Body of pancreas (tissue), 4 donors: ENCODE measurements at regions of chr13 and their contacts with region 1.

Region 1: GRCh38 chr13:20049558-20050473 is 91.3 kb downstream of the ZMYM2 start:
- DNase-seq: no peak
- ATAC-seq: peak; percentile 35
- H3K4me3 ChIP-seq: no peak overlapping the region
- H3K27ac ChIP-seq: peak overlapping the region in 2 of 4 donors; percentile 16 to 20
- H3K4me1 ChIP-seq: no peaks in the 10 kb centered on the region
- H3K27me3 ChIP-seq: no peaks in the 10 kb centered on the region
- CTCF ChIP-seq: no peak
- POLR2A ChIP-seq: no peak

Region 2: DNA sequence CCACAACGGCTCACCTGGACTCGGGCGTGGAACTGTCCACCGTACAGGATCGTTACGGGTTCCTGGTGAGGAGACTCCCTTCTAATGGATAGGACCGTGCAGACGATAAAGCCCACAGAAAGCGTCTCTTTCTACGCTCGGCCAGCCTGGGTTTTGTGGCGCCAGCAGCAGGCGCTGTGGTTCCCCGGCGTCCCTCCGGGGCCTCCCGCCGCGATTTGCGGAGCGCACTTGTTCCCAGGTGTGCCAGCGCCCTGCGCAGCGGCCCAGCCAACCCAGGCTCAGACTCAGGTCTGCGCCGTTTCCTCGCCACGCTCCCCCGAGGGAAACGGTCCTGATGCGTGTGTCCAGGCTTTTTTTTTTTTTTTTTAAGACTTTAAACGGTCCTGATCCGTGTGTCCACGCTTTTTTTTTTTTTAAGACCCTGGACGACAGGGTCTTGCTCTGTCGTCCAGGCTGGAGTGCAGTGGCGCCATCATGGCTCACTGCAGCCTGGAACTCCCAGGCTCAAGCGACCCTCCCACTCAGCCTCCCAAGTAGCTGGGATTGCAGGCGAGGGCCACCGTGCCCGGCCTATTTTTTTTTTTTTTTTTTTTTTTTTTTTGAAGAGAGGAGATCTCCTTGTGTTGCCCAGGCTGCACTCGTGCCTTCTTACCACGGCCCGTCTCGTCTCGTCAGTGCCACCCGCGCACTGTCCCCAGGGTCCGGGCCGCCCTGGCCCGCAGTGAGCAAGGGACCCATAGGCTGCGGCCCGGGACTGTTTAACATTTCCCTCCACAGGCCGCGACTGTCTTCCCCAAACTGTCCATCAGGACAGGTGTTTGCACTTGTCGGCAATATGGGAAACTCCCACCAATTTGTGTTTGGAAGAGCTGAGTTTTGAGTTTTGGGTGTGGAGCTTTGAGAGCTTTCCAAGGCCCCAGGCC is 87.2 kb after region 1 on chr13:
- intact Hi-C with region 1: no loop called
- DNase-seq: peak; percentile 60 to 74 (median 68)
- ATAC-seq: peak; percentile 89
- H3K4me3 ChIP-seq: no peak overlapping the region
- H3K27ac ChIP-seq: no peak overlapping the region
- H3K4me1 ChIP-seq: peaks cover 10% of the 10 kb centered on the region
- H3K27me3 ChIP-seq: peaks cover 0 to 6% of the 10 kb centered on the region in 2 donors
- CTCF ChIP-seq: peak in 5 of 7 experiments; percentile 28 to 47 (median 36)
- POLR2A ChIP-seq: no peak

Region 3: DNA sequence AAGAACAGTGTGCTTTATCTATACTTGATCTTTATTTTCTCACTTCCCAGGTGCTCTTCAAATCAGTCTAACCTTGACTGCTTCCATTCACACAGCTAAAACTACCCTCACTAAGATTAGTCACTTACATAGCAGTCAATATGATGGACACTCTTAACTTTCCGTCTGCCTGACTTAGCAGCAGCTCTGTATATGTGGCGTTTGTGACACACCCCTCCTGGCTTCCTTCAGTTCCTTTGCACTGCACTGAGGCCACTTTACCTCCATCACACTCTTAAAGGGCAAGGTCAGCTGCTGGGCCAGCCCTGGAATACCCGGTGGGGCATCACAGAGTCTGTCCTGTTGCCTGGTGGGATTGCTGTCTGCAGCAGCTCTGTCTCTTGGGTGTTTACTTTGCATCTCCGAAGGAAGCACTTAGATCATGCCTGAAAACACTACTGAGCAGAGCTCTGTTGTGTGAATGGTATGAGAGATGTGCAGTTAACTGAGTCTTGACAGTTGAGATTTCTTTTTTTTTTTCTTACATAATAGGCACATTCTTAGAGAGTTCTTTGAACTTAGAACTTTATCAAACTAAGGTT is 618.1 kb after region 1 on chr13:
- intact Hi-C with region 1: no loop called
- DNase-seq: no peak
- ATAC-seq: no peak
- H3K4me3 ChIP-seq: no peak overlapping the region
- H3K27ac ChIP-seq: no peak overlapping the region
- H3K4me1 ChIP-seq: no peaks in the 10 kb centered on the region
- H3K27me3 ChIP-seq: no peaks in the 10 kb centered on the region
- CTCF ChIP-seq: no peak
- POLR2A ChIP-seq: no peak

Region 4: GRCh38 chr13:20696073-20696472 is 646.3 kb after region 1 on chr13:
- intact Hi-C with region 1: loop called (anchors 10 kb)
- DNase-seq: no peak
- ATAC-seq: no peak
- H3K4me3 ChIP-seq: no peak overlapping the region
- H3K27ac ChIP-seq: no peak overlapping the region
- H3K4me1 ChIP-seq: no peaks in the 10 kb centered on the region
- H3K27me3 ChIP-seq: no peaks in the 10 kb centered on the region
- CTCF ChIP-seq: no peak
- POLR2A ChIP-seq: no peak